ENCODE measurements at regions of chr10 and their contacts with region 1.

Region 1: GRCh38 chr10:5283305-5284158 is 81.2 kb upstream of the UCN3 start:
- DNase-seq: peak; percentile 70 to 82 (median 75)
- H3K4me3 ChIP-seq: peak overlapping the region in 1 of 3 experiments; percentile 38
- H3K4me3 Mint-ChIP-seq: peak overlapping the region; percentile 40 to 82
- H3K27ac ChIP-seq: peak overlapping the region; percentile 69 to 93
- H3K27ac Mint-ChIP-seq: peak overlapping the region; percentile 92 to 99 (median 96)
- H3K4me1 ChIP-seq: peaks cover 28 to 31% of the 10 kb centered on the region in 2 donors
- H3K4me1 Mint-ChIP-seq: peaks cover 32% of the 10 kb centered on the region
- H3K27me3 ChIP-seq: no peaks in the 10 kb centered on the region
- H3K27me3 Mint-ChIP-seq: peaks cover 0 to 4% (median 0%) of the 10 kb centered on the region in 3 donors
- CTCF ChIP-seq: peak; percentile 84

Region 2: GRCh38 chr10:4475827-4476490 is 807.6 kb before region 1 on chr10:
- intact Hi-C with region 1: no loop called
- DNase-seq: no peak
- H3K4me3 ChIP-seq: no peak overlapping the region
- H3K4me3 Mint-ChIP-seq: no peak overlapping the region
- H3K27ac ChIP-seq: no peak overlapping the region
- H3K27ac Mint-ChIP-seq: peak overlapping the region in 1 of 7 donors; percentile 13
- H3K4me1 ChIP-seq: no peaks in the 10 kb centered on the region
- H3K4me1 Mint-ChIP-seq: no peaks in the 10 kb centered on the region
- H3K27me3 ChIP-seq: no peaks in the 10 kb centered on the region
- H3K27me3 Mint-ChIP-seq: peaks cover 1 to 2% (median 1%) of the 10 kb centered on the region in 3 donors
- CTCF ChIP-seq: no peak

Region 3: GRCh38 chr10:5385224-5385623 is 101.7 kb after region 1 on chr10:
- intact Hi-C with region 1: loop called in 1 of 2 experiments (anchors 10 kb)
- DNase-seq: no peak
- H3K4me3 ChIP-seq: no peak overlapping the region
- H3K4me3 Mint-ChIP-seq: no peak overlapping the region
- H3K27ac ChIP-seq: no peak overlapping the region
- H3K27ac Mint-ChIP-seq: no peak overlapping the region
- H3K4me1 ChIP-seq: no peaks in the 10 kb centered on the region
- H3K4me1 Mint-ChIP-seq: no peaks in the 10 kb centered on the region
- H3K27me3 ChIP-seq: no peaks in the 10 kb centered on the region
- H3K27me3 Mint-ChIP-seq: peaks cover 1 to 2% (median 2%) of the 10 kb centered on the region in 3 donors
- CTCF ChIP-seq: no peak